ENCODE measurements at regions of chr3 and their contacts with region 1.

Region 1: DNA sequence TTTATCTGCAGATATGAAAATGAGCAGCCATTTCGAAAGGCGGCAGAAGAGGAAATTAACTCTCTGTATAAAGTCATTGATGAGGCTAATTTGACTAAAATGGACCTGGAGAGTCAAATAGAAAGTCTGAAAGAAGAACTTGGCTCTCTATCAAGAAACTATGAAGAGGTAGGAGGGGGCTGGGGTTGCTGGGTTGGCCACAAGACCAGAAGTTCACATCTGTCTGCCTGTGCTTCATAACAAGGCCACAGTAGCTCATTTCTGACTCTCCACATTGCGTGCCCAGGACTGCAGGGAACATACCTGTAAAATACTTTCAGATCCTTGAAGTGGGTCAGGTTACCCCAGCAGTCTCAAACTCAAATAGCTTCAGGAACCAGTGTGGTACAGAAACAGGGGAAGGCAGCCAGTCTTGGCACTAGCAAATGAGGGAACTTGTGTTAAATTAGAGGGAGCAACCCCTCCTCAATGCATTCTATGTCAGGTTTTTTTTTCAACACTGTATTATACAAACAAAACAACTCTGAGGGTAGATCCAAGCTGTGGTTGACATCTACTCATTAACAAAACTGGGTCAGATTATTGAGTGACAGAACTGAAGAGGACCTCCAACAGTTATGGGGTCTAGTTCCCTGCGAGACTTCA is 48.7 kb downstream of the BFSP2 start:
- DNase-seq: peak; percentile 76
- H3K4me3 Mint-ChIP-seq: no peak overlapping the region
- H3K27ac Mint-ChIP-seq: peak overlapping the region; percentile 42
- H3K4me1 Mint-ChIP-seq: peaks cover 36% of the 10 kb centered on the region
- H3K27me3 Mint-ChIP-seq: no peaks in the 10 kb centered on the region

Region 2: DNA sequence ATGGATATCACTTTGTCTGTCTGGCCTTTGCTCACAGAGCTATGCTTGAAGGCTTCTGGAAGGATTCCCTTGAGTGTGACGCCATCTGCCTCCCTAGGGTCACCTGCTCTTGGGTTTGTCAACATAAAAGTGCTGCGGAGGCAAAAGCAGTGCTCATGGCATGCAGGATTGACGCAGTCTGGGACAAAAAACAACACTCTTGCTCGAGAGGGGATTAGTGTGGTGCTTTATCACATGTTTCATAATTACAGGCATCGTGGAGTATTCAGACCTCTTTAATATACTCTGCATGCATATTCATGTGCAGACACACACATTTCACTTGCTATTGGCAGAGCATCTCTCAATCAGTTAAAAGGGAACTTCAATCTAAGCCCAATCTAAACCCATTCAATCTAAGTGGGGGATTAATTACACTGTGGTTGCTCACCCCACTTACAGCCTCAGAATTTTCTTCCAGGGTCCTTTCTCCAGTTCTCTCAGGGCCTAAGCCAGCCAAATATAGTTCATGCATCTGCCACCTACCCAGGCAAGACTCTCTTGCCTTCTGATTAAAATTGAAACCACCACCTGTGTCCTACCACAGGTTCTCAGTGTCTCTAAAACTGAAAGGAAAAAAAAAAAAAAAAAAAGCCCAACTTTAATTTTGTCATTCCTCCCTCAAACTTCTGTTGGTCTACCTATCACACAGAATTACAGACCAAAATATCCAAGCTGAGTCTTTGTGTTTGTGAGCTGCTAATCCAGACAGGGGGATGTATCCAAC is 26.8 kb after region 1 on chr3:
- CTCF ChIA-PET with region 1: interaction called, 3 read pairs
- intact Hi-C with region 1: loop called (anchors 1 kb)
- DNase-seq: peak; percentile 46
- H3K4me3 Mint-ChIP-seq: no peak overlapping the region
- H3K27ac Mint-ChIP-seq: peak overlapping the region; percentile 59
- H3K4me1 Mint-ChIP-seq: peaks cover 48% of the 10 kb centered on the region
- H3K27me3 Mint-ChIP-seq: no peaks in the 10 kb centered on the region

Region 3: DNA sequence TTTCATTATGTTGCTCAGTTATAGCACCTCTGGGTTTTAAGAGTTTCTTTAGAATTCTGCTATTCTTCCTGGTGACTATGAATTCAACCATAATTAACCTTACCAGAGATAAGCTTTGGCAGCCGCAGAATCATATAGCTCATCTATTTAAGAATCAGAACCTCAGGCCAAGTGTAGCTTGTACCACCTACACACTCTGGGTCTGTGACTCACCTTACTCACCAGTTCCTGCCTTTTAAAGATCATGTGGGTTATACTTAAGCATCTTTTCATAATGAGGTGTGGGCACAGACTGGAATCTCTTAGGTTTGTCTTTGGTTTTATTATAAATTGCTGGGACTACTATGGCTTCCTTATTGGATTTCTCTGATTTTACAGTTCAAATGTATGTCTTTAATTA is 146.7 kb after region 1 on chr3:
- CTCF ChIA-PET with region 1: interaction called, 3 read pairs
- intact Hi-C with region 1: loop called (anchors 5 kb)
- DNase-seq: peak; percentile 49
- H3K4me3 Mint-ChIP-seq: no peak overlapping the region
- H3K27ac Mint-ChIP-seq: no peak overlapping the region
- H3K4me1 Mint-ChIP-seq: peaks cover 21% of the 10 kb centered on the region
- H3K27me3 Mint-ChIP-seq: no peaks in the 10 kb centered on the region

Region 4: DNA sequence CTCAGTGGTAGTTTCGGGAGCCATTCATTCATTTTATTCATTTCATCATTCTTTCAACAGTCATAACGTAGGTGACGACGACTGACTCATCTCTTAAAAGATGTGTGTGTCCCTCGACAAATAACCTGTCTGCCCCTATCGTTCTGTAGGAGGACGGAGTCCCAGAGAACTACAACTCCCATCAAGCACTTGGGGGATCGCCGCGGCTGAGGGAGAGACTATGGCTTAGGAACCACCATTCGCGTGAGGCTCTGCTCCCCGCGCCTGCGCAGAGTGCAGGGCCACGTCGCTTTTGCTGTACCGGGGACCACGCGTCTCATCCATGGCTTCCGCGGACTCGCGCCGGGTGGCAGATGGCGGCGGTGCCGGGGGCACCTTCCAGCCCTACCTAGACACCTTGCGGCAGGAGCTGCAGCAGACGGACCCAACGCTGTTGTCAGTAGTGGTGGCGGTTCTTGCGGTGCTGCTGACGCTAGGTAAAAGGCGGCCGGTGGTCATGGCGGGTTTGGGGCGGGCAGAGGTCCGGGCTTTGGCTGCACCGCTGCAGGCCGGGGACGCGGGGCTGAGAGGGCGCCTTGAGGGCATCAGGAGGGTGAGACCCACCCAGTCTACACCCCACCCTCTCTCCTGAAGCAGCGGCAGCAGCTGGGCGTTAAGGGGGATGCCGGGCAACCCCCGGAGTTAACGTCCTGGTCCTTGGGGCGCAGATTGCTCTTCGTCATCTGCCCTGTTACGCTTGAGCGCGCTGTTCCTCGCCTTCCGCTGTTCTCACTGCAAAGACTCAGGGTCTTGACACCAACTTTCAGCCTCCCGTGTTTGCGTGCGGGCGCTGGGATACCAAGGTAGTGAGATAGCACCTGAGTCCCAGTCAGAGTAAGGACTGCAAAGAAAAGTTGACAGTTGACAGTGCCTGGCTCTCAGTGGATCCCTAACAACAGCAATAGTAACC is 357.2 kb after region 1 on chr3 and contains the start of gene SRPRB:
- CTCF ChIA-PET with region 1: no interaction called
- intact Hi-C with region 1: loop called (anchors 1 kb)
- DNase-seq: peak; percentile 98
- H3K4me3 Mint-ChIP-seq: peak within 1 kb of the TSS; percentile 93
- H3K27ac Mint-ChIP-seq: peak within 1 kb of the TSS; percentile 94
- H3K4me1 Mint-ChIP-seq: peaks cover 37% of the 10 kb centered on the region
- H3K27me3 Mint-ChIP-seq: no peaks in the 10 kb centered on the region
- total RNA-seq, gene SRPRB: 55.0 to 56.8 TPM